ENCODE measurements at regions of chr6 and their contacts with region 1.

Region 1: DNA sequence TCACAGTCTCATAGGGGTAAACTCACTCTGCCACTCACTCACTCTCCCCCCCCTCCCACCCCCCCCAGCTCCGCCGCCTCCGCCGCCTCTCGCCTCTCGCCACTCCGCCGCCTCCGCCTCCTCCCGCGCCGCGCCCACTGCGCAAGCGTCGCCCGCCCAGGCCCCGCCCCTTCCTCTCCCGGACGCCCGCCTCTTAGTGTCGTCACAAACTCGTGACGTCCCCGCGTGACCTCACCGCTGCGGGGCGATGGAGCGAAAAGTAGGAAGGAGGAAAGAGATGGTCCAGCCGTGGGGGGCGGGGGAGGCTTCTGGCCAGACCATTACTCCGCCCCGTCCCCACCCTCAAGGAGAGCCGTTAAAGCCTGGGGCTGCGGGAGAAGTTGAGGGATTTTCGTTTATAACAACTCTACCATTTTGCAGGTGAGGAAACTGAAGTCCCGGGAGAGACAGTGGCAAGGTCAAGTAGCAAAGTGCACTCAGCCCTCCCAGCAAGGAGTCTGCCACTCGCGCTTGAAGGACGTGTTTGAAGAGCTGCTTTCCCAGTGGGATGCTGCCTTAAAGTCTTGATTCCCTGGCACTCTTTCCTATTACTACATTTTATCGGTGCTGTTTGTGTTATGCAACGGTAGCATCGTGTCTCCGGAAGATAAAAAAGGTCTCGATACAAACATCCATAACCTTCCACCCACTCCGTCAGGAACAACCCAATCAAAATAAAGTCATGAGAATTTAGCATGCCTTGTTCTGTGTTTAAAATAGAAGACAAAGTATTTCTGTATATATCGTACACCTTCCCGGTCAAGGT is at the start of gene ILRUN:
- H3K4me3 ChIP-seq: peak within 1 kb of the TSS; percentile 96
- H3K27ac ChIP-seq: peak within 1 kb of the TSS; percentile 81
- H3K4me1 ChIP-seq: no peaks in the 10 kb centered on the region
- CTCF ChIP-seq: no peak

Region 2: DNA sequence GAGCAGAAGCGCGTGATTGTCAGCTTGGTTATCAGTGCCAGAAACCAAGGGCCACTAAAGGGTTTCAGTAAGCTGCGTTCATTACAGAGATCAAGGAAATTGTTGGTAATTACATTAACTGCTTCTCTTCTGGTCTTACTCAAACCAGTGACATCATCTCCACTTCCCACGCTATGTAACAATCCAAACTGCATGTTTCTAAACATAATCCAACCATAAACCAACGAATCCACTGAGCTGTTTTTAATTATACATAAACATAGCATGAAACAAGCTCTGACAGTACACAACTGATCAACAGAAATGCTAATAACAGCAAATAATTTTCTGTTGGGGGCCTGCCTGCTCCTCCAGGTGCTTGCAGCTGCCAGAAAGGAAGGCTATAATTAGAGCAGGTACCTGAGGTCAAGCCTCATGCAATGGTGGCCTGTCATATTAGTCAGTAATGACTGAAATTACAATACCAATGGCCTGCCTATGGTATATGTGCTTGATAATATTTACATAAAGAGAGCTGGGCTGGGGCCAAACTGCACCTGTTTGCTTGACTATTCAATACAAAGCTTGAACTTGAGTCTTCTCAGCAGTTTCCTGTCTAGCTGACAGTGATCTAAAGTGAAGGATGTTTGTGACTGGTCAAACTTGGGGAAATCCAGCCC is 40.4 kb before region 1 on chr6:
- CTCF ChIA-PET with region 1: no interaction called
- POLR2A ChIA-PET with region 1: interaction called, 12 read pairs
- H3K4me3 ChIP-seq: no peak overlapping the region
- H3K27ac ChIP-seq: peak overlapping the region; percentile 67
- H3K4me1 ChIP-seq: peaks cover 19% of the 10 kb centered on the region
- CTCF ChIP-seq: no peak

Region 3: DNA sequence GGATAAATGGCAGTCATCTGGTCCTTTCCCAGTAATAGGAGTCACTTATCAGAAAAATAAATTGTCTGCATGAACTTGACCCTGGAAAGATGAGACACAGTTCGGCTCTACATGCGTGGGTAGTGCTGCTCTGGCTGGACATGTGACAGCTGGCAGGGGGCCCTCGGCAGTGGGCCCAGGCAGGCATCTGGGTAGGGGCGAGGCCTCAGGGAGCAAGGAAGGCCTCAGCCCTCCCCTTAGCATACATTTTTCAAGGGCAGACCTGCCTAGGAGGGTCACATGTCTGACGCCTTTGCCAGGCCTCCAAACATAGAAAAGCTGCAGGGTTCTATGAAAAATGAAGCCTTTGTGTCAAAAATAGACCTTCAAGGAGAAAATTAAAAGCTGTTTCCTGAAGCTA is 12.4 kb after region 1 on chr6:
- CTCF ChIA-PET with region 1: interaction called, 4 read pairs
- POLR2A ChIA-PET with region 1: interaction called, 11 read pairs
- H3K4me3 ChIP-seq: no peak overlapping the region
- H3K27ac ChIP-seq: no peak overlapping the region
- H3K4me1 ChIP-seq: peaks cover 6% of the 10 kb centered on the region; the same call in 1 of the 2 replicates
- CTCF ChIP-seq: no peak

Region 4: GRCh38 chr6:34973547-34974248 is 276.8 kb after region 1 on chr6:
- CTCF ChIA-PET with region 1: no interaction called
- POLR2A ChIA-PET with region 1: no interaction called
- H3K4me3 ChIP-seq: no peak overlapping the region
- H3K27ac ChIP-seq: no peak overlapping the region
- H3K4me1 ChIP-seq: no peaks in the 10 kb centered on the region
- CTCF ChIP-seq: no peak

Measured in HEK293 (cell line).